ENCODE measurements at regions of chr1 and their contacts with region 1.

Region 1: DNA sequence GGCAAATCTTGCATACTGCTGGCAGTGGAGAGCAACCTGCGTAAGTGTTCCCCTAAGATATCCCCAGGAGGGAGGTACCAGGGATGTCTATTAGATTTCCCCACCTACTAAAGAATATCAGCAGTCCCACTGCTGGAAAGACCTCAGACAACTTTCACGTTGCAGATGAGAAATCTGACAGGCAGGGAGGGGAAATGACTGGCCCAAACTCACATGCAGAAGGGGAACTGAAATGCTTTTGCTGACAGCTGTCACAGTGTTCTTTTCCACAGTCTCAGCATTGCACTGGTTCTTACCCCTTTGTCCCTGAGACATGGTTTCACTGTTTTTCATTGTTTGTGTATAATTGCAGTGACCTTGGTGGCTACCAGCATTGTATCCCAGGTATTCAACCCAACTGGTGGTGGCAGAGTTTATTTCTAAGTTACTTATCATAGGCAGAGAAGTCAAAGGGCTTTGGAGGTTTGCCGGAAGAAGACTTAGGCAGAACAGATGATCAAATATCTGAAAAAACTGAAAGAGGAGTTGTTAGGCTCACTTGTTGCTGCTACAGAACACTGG is 84.8 kb upstream of the ATP1A1 start:
- ATAC-seq: no peak
- H3K4me3 ChIP-seq: no peak overlapping the region
- H3K27ac ChIP-seq: no peak overlapping the region
- H3K4me1 ChIP-seq: no peaks in the 10 kb centered on the region

Region 2: GRCh38 chr1:116178837-116179236 is 109.4 kb before region 1 on chr1:
- in situ Hi-C with region 1: loop called in 1 of 9 experiments (anchors 25 kb)
- ATAC-seq: no peak
- H3K4me3 ChIP-seq: no peak overlapping the region
- H3K27ac ChIP-seq: no peak overlapping the region
- H3K4me1 ChIP-seq: peaks cover 0 to 11% of the 10 kb centered on the region in 2 donors

Region 3: DNA sequence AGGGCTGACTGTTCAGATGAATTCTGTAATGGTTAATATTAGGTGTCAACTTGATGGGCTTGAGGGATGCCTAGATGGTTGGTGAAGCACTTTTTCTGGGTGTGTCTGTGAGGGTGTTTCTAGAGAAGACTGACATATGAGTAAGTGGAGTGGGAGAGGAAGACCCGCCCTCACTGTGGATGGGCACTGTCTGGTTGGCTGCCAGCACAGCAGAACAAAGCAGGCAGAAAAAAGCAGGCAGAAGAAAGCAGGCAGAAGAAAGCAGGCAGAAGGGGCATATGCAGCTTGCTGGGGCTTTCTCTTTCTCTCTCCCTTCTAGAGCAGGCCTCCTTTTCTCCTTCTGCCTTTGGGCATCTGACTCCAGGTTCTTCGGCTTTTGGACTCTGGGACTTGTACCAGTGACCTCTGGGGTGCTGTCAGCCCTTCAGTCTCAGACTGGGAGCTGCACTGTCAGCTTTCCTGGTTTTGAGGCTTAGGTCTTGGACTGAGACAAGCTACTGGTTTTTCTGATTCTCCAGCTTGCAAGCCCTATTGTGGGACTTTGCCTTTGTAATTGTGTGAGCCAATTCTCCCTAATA is 423.1 kb after region 1 on chr1:
- in situ Hi-C with region 1: no loop called
- ATAC-seq: peak; percentile 42 to 89 (median 76)
- H3K4me3 ChIP-seq: no peak overlapping the region
- H3K27ac ChIP-seq: no peak overlapping the region
- H3K4me1 ChIP-seq: peaks cover 14 to 16% of the 10 kb centered on the region in 2 donors